ENCODE measurements at regions of chr18 and their contacts with region 1.

Region 1: DNA sequence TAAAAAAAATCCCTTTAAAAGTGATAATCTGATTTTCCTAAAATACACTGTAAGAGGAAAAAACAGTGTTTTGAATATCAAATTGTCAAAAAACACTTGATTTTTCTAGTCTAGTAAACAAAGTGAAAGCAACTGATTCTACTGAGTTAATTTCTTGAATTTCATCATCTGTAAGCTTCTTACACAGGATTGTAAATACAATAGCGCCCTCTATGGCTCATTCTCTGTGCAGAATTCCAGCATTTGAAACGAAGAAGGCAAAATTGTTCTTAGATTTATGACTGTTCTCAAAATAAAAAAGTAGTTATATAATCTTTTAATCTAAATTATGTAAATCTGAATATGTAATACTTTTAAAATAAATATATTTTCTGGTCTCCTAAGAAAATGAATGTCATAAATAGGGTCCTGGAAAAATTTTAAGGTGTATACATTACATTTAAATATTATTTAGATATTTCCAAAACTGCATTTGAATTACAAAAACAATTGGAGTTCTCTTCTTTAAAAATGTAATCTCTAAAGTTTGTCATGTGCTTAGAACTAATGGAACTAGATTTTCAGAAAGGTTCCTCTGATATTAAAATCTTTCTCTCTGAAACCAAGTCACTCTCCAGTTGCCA is 176.9 kb upstream of the MC4R start:
- DNase-seq: peak; percentile 24
- ATAC-seq: no peak
- H3K4me3 Mint-ChIP-seq: no peak overlapping the region
- H3K27ac Mint-ChIP-seq: no peak overlapping the region
- H3K4me1 Mint-ChIP-seq: no peaks in the 10 kb centered on the region
- H3K27me3 Mint-ChIP-seq: no peaks in the 10 kb centered on the region
- CTCF ChIP-seq: peak; percentile 61

Region 2: DNA sequence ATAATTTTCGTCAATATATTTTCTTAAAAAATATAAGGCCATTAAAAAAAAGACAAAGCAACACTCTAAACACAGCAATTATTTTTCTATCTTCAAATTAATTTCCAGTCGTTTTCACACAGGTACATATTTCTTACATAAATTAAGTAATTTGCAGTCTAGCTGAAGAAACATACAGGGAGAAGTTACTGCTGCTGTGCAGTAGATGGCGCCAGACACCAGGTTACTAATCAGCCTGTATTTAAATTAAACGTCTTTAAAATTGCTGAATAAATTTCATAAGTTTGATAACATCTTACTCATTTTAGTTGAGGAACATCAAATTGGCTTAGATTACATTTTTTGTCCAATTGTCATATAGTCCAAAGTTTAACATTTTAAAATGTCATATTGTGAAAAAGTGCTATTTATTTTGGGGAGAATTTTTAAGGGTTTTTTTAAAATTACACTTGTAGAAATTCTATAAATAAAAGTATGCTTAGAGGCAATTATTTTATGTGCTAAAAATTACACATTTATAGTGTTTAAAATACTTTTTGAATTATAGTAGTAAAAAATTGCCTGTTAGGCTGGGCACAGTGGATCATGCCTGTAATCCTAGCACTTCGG is 561.2 kb before region 1 on chr18:
- CTCF ChIA-PET with region 1: interaction called, 12 read pairs
- POLR2A ChIA-PET with region 1: no interaction called
- intact Hi-C with region 1: loop called (anchors 5 kb)
- DNase-seq: peak; percentile 73
- ATAC-seq: no peak
- H3K4me3 Mint-ChIP-seq: no peak overlapping the region
- H3K27ac Mint-ChIP-seq: no peak overlapping the region
- H3K4me1 Mint-ChIP-seq: no peaks in the 10 kb centered on the region
- H3K27me3 Mint-ChIP-seq: peaks cover 26% of the 10 kb centered on the region
- CTCF ChIP-seq: peak; percentile 96

Region 3: GRCh38 chr18:59996370-59996966 is 553.0 kb before region 1 on chr18:
- CTCF ChIA-PET with region 1: interaction called, 15 read pairs
- POLR2A ChIA-PET with region 1: no interaction called
- intact Hi-C with region 1: loop called (anchors 5 kb)
- DNase-seq: peak; percentile 47
- ATAC-seq: no peak
- H3K4me3 Mint-ChIP-seq: no peak overlapping the region
- H3K27ac Mint-ChIP-seq: no peak overlapping the region
- H3K4me1 Mint-ChIP-seq: no peaks in the 10 kb centered on the region
- H3K27me3 Mint-ChIP-seq: peaks cover 30% of the 10 kb centered on the region
- CTCF ChIP-seq: peak; percentile 55

Measured in activated CD8-positive, alpha-beta T cell treated with anti-CD3 and anti-CD28 coated beads for 36 hours (primary cell).